ENCODE measurements at regions of chr4 and their contacts with region 1.

Region 1: DNA sequence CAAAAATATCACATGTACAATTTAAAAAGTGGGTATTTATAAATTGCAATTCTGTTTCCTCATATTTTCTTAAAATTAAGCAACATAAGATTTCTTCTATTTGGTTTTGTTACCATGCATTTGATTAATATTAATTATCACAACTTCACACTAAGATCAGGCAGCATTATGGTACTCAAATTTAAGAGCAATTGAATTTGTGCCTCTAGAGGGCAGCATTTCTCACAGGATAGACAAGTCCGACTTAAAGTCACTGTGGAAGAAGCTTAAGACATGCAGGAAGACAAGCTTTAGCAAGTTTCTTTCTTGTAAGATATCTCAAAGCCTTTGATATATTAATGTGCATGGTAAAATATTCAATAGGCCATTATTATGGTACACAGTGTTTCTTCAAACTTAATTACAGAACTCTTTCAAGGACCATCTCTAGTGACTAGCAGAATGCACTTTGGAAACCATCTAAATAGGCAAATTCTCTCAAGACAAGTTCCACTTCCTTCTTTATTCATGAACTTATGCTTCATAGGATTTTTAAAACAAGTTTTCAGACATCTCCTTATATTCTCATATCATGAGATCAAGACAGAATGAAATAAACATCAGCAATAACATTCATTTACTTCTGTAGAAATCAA is 35.0 kb downstream of the FBXW7 start:
- DNase-seq: peak; percentile 74
- ATAC-seq: peak; percentile 77
- H3K4me3 ChIP-seq: peak overlapping the region; percentile 21; the same call in 1 of the 2 replicates
- H3K27ac ChIP-seq: peak overlapping the region; percentile 57
- H3K4me1 ChIP-seq: peaks cover 18% of the 10 kb centered on the region
- H3K27me3 ChIP-seq: no peaks in the 10 kb centered on the region
- CTCF ChIP-seq: peak; percentile 61 to 85 (median 83)
- EP300 ChIP-seq: no peak
- POLR2A ChIP-seq: no peak
- RAD21 ChIP-seq: peak; percentile 87

Region 2: DNA sequence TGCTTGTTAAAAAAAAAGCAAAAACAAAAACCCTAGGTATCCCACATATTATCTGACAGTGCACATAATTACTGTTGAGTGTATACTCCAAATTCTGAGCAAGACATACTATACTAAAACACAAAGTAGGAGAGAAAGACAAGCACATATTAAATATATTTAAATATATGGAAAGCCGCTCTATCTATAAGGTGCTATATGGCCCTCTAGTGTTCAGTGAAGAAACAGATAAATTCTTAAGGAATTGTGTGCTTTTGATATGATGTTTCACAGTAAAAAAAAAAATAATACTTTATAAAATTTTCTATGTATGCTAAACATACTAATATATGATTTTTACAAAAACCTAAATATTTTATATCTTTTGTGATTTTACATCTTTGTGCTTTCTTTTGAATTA is 102.9 kb before region 1 on chr4:
- CTCF ChIA-PET with region 1: no interaction called
- POLR2A ChIA-PET with region 1: no interaction called
- RAD21 ChIA-PET with region 1: no interaction called
- SMC1A ChIA-PET with region 1: no interaction called
- in situ Hi-C with region 1: no loop called
- intact Hi-C with region 1: no loop called
- DNase-seq: no peak
- ATAC-seq: 0 out of 3 replicates have a peak, but pooled peaks have one; percentile 33
- H3K4me3 ChIP-seq: no peak overlapping the region
- H3K27ac ChIP-seq: no peak overlapping the region
- H3K4me1 ChIP-seq: peaks cover 3% of the 10 kb centered on the region
- H3K27me3 ChIP-seq: no peaks in the 10 kb centered on the region
- CTCF ChIP-seq: peak; percentile 1 to 28 (median 13); a peak in 1 of 6 replicates
- EP300 ChIP-seq: no peak
- POLR2A ChIP-seq: no peak
- RAD21 ChIP-seq: peak; percentile 38; the same call in 1 of the 2 replicates

Region 3: GRCh38 chr4:152460488-152460887 is 40.4 kb before region 1 on chr4:
- CTCF ChIA-PET with region 1: interaction called, 154 read pairs
- POLR2A ChIA-PET with region 1: interaction called, 8 read pairs
- RAD21 ChIA-PET with region 1: interaction called, 39 read pairs
- SMC1A ChIA-PET with region 1: interaction called, 152 read pairs
- in situ Hi-C with region 1: no loop called
- intact Hi-C with region 1: loop called (anchors 2 kb)
- DNase-seq: peak; percentile 43
- ATAC-seq: peak; percentile 32
- H3K4me3 ChIP-seq: no peak overlapping the region
- H3K27ac ChIP-seq: peak overlapping the region; percentile 73
- H3K4me1 ChIP-seq: peaks cover 54% of the 10 kb centered on the region
- H3K27me3 ChIP-seq: no peaks in the 10 kb centered on the region
- CTCF ChIP-seq: peak; percentile 9 to 57 (median 38); a peak in 4 of 6 replicates
- EP300 ChIP-seq: no peak
- POLR2A ChIP-seq: no peak
- RAD21 ChIP-seq: peak; percentile 68

Region 4: DNA sequence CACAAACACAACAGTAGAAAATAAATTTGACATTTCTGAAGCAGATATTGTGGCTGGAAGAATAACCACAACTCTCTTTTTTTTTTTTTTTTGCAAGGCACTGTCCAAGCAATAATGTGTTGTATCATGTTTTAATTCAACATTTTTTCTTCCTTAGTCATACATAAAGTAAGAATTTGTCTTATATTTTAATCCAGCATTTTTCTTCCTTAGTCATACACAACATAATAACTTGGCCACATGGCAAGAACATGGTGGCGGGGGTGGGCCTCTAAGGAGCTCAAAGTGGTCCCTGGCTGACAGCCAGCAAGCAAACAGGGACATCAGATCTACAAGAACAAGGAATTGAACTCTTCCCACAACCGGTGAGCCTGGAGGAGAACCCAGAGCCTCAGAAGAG is 14.8 kb after region 1 on chr4:
- CTCF ChIA-PET with region 1: interaction called, 80 read pairs
- POLR2A ChIA-PET with region 1: interaction called, 6 read pairs
- RAD21 ChIA-PET with region 1: interaction called, 14 read pairs
- SMC1A ChIA-PET with region 1: interaction called, 113 read pairs
- in situ Hi-C with region 1: no loop called
- intact Hi-C with region 1: no loop called
- DNase-seq: no peak
- ATAC-seq: no peak
- H3K4me3 ChIP-seq: no peak overlapping the region
- H3K27ac ChIP-seq: no peak overlapping the region
- H3K4me1 ChIP-seq: peaks cover 15% of the 10 kb centered on the region; the same call in 1 of the 2 replicates
- H3K27me3 ChIP-seq: no peaks in the 10 kb centered on the region
- CTCF ChIP-seq: no peak
- EP300 ChIP-seq: no peak
- POLR2A ChIP-seq: no peak
- RAD21 ChIP-seq: no peak

Region 5: DNA sequence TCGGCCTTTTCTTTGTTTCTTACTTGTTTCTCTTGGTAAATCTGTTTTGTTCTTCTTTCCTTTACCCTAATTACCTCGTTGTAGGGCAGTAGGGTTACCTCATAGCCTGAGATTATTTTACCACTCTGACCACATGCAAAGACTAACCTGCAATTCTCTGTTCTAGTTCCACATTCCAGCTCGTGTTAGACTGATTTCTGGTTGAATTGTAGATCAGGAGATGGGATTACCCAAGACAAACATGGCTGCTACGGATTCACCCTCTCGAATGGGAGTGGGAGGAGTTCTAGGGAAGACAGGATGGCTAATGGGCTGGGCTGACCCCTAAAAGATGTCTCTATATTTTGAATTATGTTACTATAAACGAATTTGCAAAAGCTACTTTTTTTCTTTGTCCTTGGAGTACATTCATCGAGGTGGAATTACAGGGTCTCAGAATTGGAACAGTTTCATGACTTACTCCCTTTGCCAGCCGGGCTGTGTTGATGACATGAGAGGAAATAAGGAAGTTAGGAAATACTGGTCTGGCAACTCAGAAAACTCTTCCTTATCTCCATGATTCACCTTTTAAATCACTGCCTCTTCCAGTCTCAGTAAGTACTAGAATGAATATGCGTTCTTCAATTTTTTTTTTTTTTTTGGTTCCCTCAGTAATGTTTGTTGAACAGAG is 71.6 kb after region 1 on chr4:
- CTCF ChIA-PET with region 1: interaction called, 14 read pairs
- POLR2A ChIA-PET with region 1: interaction called, 3 read pairs
- RAD21 ChIA-PET with region 1: interaction called, 5 read pairs
- SMC1A ChIA-PET with region 1: interaction called, 24 read pairs
- in situ Hi-C with region 1: no loop called
- intact Hi-C with region 1: no loop called
- DNase-seq: no peak
- ATAC-seq: peak; percentile 96
- H3K4me3 ChIP-seq: no peak overlapping the region
- H3K27ac ChIP-seq: no peak overlapping the region
- H3K4me1 ChIP-seq: peaks cover 4% of the 10 kb centered on the region; the same call in 1 of the 2 replicates
- H3K27me3 ChIP-seq: no peaks in the 10 kb centered on the region
- CTCF ChIP-seq: no peak
- EP300 ChIP-seq: peak; percentile 53 to 72; a peak in 3 of 4 replicates
- POLR2A ChIP-seq: no peak
- RAD21 ChIP-seq: no peak

Region 6: GRCh38 chr4:152610131-152610530 is 109.2 kb after region 1 on chr4:
- CTCF ChIA-PET with region 1: interaction called, 5 read pairs
- POLR2A ChIA-PET with region 1: no interaction called
- RAD21 ChIA-PET with region 1: interaction called, 12 read pairs
- SMC1A ChIA-PET with region 1: interaction called, 6 read pairs
- in situ Hi-C with region 1: no loop called
- intact Hi-C with region 1: no loop called
- DNase-seq: no peak
- ATAC-seq: no peak
- H3K4me3 ChIP-seq: no peak overlapping the region
- H3K27ac ChIP-seq: no peak overlapping the region
- H3K4me1 ChIP-seq: no peaks in the 10 kb centered on the region
- H3K27me3 ChIP-seq: no peaks in the 10 kb centered on the region; a peak in 1 of 4 replicates
- CTCF ChIP-seq: no peak
- EP300 ChIP-seq: no peak
- POLR2A ChIP-seq: no peak
- RAD21 ChIP-seq: no peak

Region 7: DNA sequence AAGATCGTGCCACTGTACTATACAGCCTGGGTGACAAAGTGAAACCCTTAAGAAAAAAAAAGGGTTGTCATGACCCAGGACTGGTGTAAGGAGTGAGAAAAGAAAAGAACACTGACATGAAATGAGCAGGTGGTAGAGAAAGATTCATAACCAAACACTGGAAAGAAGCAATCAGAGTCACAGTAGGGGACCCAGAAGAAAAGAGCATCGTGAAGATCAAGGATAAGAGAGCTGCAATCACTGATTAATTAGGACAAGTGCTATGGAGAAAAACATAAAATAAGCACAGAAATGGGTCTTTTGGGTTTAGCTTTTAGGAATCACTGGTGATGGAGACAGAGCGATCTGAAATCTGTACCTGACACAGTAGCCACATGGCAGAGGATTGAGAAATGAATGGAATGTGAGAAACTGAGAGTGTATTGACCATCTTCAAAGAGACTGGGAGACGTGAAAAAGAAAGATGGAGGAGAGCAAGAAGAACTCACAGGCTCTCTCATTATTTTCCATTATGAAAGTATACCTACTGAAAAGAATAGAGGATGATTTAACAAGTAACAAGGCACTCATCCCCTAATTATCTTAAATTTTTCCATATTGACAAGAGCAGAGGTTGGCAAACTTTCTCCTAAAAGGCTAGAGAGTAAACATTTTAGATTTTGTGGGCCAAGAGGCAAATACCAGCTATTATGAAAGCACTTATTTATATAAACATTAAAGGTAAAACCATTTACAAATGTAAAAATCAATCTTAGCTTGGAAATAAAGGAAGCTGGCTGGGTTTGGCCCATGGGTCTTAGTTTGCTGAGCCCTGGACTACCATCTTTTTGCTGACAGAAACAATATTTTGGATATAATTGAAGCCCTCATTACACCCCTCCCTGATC is 171.5 kb after region 1 on chr4:
- CTCF ChIA-PET with region 1: interaction called, 33 read pairs
- POLR2A ChIA-PET with region 1: interaction called, 4 read pairs
- RAD21 ChIA-PET with region 1: interaction called, 31 read pairs
- SMC1A ChIA-PET with region 1: interaction called, 48 read pairs
- in situ Hi-C with region 1: no loop called
- intact Hi-C with region 1: no loop called
- DNase-seq: no peak
- ATAC-seq: no peak
- H3K4me3 ChIP-seq: no peak overlapping the region
- H3K27ac ChIP-seq: no peak overlapping the region
- H3K4me1 ChIP-seq: peaks cover 16% of the 10 kb centered on the region
- H3K27me3 ChIP-seq: no peaks in the 10 kb centered on the region
- CTCF ChIP-seq: no peak
- EP300 ChIP-seq: no peak
- POLR2A ChIP-seq: no peak
- RAD21 ChIP-seq: no peak

Region 8: GRCh38 chr4:152779513-152780266 is 278.8 kb after region 1 on chr4 and contains the starts of genes ARFIP1 and TIGD4:
- CTCF ChIA-PET with region 1: interaction called, 15 read pairs
- POLR2A ChIA-PET with region 1: no interaction called
- RAD21 ChIA-PET with region 1: interaction called, 7 read pairs
- SMC1A ChIA-PET with region 1: interaction called, 3 read pairs
- in situ Hi-C with region 1: no loop called
- intact Hi-C with region 1: no loop called
- DNase-seq: peak; percentile 90
- ATAC-seq: peak; percentile 93
- H3K4me3 ChIP-seq: peak within 1 kb of the TSS; percentile 91
- H3K27ac ChIP-seq: peak within 1 kb of the TSS; percentile 87
- H3K4me1 ChIP-seq: peaks cover 5% of the 10 kb centered on the region
- H3K27me3 ChIP-seq: no peaks in the 10 kb centered on the region
- CTCF ChIP-seq: peak; percentile 23 to 50 (median 35); a peak in 5 of 6 replicates
- EP300 ChIP-seq: no peak
- POLR2A ChIP-seq: peak; percentile 84
- RAD21 ChIP-seq: peak; percentile 35; the same call in 1 of the 2 replicates
- polyA plus RNA-seq, gene ARFIP1: 9.5 to 11.0 TPM
- polyA plus RNA-seq, gene TIGD4: 0.24 to 0.31 TPM

Region 9: DNA sequence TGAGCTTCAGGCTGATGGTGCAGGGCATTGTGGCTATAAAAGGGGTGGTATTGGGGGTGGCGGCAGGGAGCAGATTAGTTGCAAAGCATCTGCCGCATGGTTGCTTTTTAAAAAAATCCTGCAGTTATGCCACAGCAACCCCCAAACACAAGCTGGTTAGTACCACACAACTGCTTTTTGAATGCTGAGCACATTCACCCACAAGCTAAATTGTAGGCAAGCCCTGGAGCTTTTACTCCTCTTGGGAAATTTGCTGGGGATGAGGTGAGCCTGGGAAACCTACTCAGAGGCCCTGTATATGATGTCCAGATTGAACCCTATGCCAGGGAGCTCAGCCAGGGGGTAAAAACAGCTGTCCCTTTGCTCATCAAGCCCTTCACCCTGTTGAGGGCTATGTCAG is 669.5 kb after region 1 on chr4:
- CTCF ChIA-PET with region 1: no interaction called
- POLR2A ChIA-PET with region 1: no interaction called
- RAD21 ChIA-PET with region 1: no interaction called
- SMC1A ChIA-PET with region 1: no interaction called
- in situ Hi-C with region 1: no loop called
- intact Hi-C with region 1: no loop called
- DNase-seq: no peak
- ATAC-seq: no peak
- H3K4me3 ChIP-seq: no peak overlapping the region
- H3K27ac ChIP-seq: no peak overlapping the region
- H3K4me1 ChIP-seq: no peaks in the 10 kb centered on the region
- H3K27me3 ChIP-seq: no peaks in the 10 kb centered on the region; a peak in 2 of 4 replicates
- CTCF ChIP-seq: no peak
- EP300 ChIP-seq: no peak
- POLR2A ChIP-seq: no peak
- RAD21 ChIP-seq: no peak

Region 10: DNA sequence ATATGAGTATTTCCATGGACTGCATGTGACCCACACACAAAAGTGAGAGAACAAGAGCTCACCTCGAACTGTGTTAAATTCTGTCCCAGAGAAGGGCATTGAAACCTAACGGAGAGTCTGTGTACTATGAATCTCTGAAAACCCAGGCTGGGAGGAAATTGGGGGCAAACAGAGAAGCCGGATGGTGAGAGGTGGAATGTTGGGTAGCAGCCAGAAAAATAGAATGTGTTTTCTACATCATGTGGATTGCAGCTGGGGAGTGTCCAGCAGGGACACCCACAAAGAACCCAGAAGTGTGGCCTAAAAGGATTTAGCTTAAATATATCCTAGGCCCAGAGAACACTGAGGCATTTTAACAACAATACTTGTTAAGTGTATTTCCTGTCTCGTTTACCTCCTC is 882.2 kb after region 1 on chr4:
- CTCF ChIA-PET with region 1: no interaction called
- POLR2A ChIA-PET with region 1: no interaction called
- RAD21 ChIA-PET with region 1: no interaction called
- SMC1A ChIA-PET with region 1: no interaction called
- in situ Hi-C with region 1: no loop called
- intact Hi-C with region 1: no loop called
- DNase-seq: no peak
- ATAC-seq: no peak
- H3K4me3 ChIP-seq: no peak overlapping the region
- H3K27ac ChIP-seq: no peak overlapping the region
- H3K4me1 ChIP-seq: 0 out of 2 replicates have a peak, but pooled peaks cover 3% of the 10 kb centered on the region
- H3K27me3 ChIP-seq: no peaks in the 10 kb centered on the region
- CTCF ChIP-seq: no peak
- EP300 ChIP-seq: no peak
- POLR2A ChIP-seq: no peak
- RAD21 ChIP-seq: no peak

Measured in GM12878 (cell line).